PC-9 (cell line): ENCODE measurements at regions of chr20 and their contacts with region 1.

Region 1: GRCh38 chr20:48831572-48832349 is 4.0 kb upstream of the PREX1 start:
- DNase-seq: peak; percentile 86 to 88
- H3K4me3 ChIP-seq: no peak overlapping the region
- H3K27ac ChIP-seq: peak overlapping the region; percentile 59
- H3K4me1 ChIP-seq: peaks cover 28% of the 10 kb centered on the region
- H3K27me3 ChIP-seq: no peaks in the 10 kb centered on the region
- CTCF ChIP-seq: no peak; the same call in 1 of the 2 replicates

Region 2: GRCh38 chr20:48682529-48683251 is 149.1 kb before region 1 on chr20:
- CTCF ChIA-PET with region 1: no interaction called
- POLR2A ChIA-PET with region 1: interaction called, 8 read pairs
- intact Hi-C with region 1: loop called (anchors 5 kb)
- DNase-seq: peak; percentile 72 to 75
- H3K4me3 ChIP-seq: peak overlapping the region; percentile 16; the same call in 1 of the 2 replicates
- H3K27ac ChIP-seq: no peak overlapping the region
- H3K4me1 ChIP-seq: peaks cover 46% of the 10 kb centered on the region
- H3K27me3 ChIP-seq: no peaks in the 10 kb centered on the region
- CTCF ChIP-seq: no peak

Region 3: GRCh38 chr20:48846498-48847485 is 15.0 kb after region 1 on chr20:
- CTCF ChIA-PET with region 1: no interaction called
- POLR2A ChIA-PET with region 1: no interaction called
- intact Hi-C with region 1: no loop called
- DNase-seq: peak in 1 of 2 experiments; percentile 15
- H3K4me3 ChIP-seq: no peak overlapping the region
- H3K27ac ChIP-seq: no peak overlapping the region
- H3K4me1 ChIP-seq: peaks cover 7% of the 10 kb centered on the region
- H3K27me3 ChIP-seq: no peaks in the 10 kb centered on the region
- CTCF ChIP-seq: no peak

Region 4: DNA sequence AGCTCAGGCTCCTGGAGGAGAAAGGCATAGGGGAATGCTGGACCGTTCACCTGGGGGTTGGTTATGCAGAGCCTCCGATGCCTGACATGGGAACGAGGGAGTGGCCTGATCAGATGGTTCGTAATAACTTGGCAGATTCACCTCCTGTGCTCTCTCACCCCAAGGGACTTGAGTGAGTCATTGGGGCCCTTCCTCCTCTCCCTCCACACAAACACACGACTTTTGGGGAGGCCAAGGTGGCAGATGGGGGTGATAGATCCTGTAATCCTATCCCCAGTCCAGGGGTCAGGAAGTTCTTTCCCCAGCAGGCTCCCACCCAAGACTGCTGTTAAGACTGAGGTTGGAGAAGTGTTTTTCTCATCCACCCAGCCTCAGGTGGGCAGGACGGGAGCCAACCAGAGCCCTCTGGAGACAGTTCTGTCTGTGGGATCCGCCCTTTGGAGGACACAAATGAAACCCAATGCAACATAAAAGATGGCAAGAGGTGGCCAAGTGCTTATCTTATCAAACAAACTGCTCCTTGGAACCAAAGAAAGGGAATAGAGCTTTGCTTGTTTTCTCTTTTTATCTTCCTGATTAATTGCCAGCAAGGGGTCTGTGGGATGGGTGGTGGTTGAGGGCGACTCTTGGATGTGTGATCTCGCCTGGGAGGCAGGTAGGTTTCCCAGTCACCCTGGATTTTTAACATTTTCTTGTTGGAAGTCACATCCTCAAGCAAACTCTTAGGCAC is 44.3 kb after region 1 on chr20:
- CTCF ChIA-PET with region 1: no interaction called
- POLR2A ChIA-PET with region 1: no interaction called
- intact Hi-C with region 1: loop called (anchors 1 kb)
- DNase-seq: no peak
- H3K4me3 ChIP-seq: no peak overlapping the region
- H3K27ac ChIP-seq: no peak overlapping the region
- H3K4me1 ChIP-seq: peaks cover 35% of the 10 kb centered on the region
- H3K27me3 ChIP-seq: no peaks in the 10 kb centered on the region
- CTCF ChIP-seq: no peak